Endothelial cell of umbilical vein (primary cell): ENCODE measurements at regions of chr2 and their contacts with region 1.

Region 1: DNA sequence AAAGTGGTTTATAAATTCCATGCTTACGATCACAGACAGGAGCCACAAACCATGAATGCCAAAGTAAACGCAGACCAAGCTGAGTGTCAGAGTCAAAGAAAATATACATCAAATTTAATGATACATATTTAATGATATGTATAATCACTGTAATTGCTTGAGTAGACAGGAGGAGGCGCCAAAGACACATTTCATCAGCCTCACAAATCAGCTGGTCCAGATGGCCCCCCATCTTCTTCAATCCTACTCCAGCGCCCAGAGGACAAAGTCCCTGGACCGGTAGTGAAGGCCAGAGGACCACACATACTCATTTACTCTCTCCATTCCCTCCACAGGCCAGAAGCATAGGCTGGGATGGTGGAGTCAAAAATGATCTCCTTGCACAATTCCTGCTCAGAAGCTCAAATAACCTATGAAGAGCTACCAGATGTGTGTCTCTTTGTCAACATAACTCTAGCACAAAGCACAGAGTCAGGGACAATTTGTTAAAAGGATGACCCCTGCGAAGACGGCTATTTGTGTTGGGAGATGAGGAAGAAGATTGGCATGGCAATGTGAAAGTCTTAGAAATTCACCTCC is 149.3 kb upstream of the PGAP1 start:
- DNase-seq: no peak
- H3K4me3 ChIP-seq: no peak overlapping the region
- H3K27ac ChIP-seq: no peak overlapping the region
- H3K4me1 ChIP-seq: peaks cover 10% of the 10 kb centered on the region
- H3K27me3 ChIP-seq: no peaks in the 10 kb centered on the region
- CTCF ChIP-seq: peak; percentile 20 to 52
- POLR2A ChIP-seq: no peak

Region 2: GRCh38 chr2:197310271-197310985 is 234.6 kb after region 1 on chr2 and contains the start of gene ANKRD44:
- CTCF ChIA-PET with region 1: interaction called, 8 read pairs
- POLR2A ChIA-PET with region 1: no interaction called
- dilution Hi-C with region 1: no loop called
- intact Hi-C with region 1: loop called (anchors 2 kb)
- DNase-seq: peak; percentile 72
- H3K4me3 ChIP-seq: peak within 1 kb of the TSS; percentile 65 to 91 (median 85)
- H3K27ac ChIP-seq: no peak within 1 kb of the TSS
- H3K4me1 ChIP-seq: peaks cover 12% of the 10 kb centered on the region
- H3K27me3 ChIP-seq: peaks cover 11 to 16% of the 10 kb centered on the region in 2 experiments
- CTCF ChIP-seq: no peak
- POLR2A ChIP-seq: no peak
- total RNA-seq, gene ANKRD44: 6.1 and 8.1 TPM in 2 replicates